Naive thymus-derived CD4-positive, alpha-beta T cell (primary cell): ENCODE measurements at regions of chr1 and their contacts with region 1.

Region 1: DNA sequence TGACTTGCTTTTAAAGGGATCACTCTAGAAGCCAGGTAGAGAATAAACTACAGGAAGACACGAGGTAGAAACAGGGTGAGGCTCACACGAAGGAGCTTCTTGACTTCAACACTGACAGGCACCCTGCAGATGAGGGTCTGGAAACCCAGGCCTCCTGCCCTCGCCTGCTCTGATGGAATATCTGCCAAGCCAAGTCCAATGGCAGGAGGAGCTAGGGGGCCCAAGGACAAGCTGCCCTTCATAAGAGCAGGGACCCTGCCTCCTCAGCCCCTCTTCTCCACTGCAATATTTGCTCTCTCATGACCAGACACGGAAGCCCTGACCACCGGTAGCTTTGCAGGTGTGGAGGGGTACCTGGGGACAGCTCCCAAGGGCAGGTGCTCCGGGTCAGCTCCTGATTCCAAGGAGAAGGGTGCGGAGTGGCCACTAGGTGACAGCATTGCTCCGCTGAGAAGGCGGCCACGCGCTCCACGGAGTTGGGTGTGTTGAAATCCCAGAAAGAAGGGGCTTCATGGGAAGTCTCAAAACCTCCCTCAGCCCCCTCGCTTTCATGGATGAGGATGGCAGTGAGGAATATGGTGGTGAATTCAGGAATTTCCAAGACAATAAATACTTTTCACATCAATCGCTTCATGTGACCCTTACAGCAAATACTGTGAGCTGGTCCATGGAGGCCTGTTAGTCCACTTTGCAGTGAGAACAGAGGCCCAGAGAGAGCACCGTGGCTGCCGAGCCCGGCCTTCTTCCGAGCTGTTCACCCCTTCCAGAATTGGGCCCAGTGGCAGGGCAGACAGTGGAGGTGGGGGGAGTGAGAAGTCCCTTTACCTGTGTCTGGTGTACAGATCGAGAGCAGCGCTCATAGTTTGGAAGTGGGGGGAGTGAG is 33.2 kb upstream of the PAX7 start:
- DNase-seq: peak; percentile 16 to 67 (median 52)
- ATAC-seq: peak; percentile 49
- H3K4me3 ChIP-seq: no peak overlapping the region
- H3K4me3 Mint-ChIP-seq: no peak overlapping the region
- H3K27ac ChIP-seq: no peak overlapping the region
- H3K27ac Mint-ChIP-seq: no peak overlapping the region
- H3K4me1 ChIP-seq: no peaks in the 10 kb centered on the region
- H3K4me1 Mint-ChIP-seq: peaks cover 0 to 4% (median 0%) of the 10 kb centered on the region in 7 donors
- H3K27me3 ChIP-seq: no peaks in the 10 kb centered on the region
- H3K27me3 Mint-ChIP-seq: peaks cover 12 to 48% (median 23%) of the 10 kb centered on the region in 5 donors

Region 2: GRCh38 chr1:18470671-18471355 is 126.6 kb before region 1 on chr1:
- CTCF ChIA-PET with region 1: no interaction called
- POLR2A ChIA-PET with region 1: no interaction called
- intact Hi-C with region 1: no loop called
- DNase-seq: no peak
- ATAC-seq: no peak
- H3K4me3 ChIP-seq: no peak overlapping the region
- H3K4me3 Mint-ChIP-seq: no peak overlapping the region
- H3K27ac ChIP-seq: no peak overlapping the region
- H3K27ac Mint-ChIP-seq: no peak overlapping the region
- H3K4me1 ChIP-seq: no peaks in the 10 kb centered on the region
- H3K4me1 Mint-ChIP-seq: no peaks in the 10 kb centered on the region
- H3K27me3 ChIP-seq: no peaks in the 10 kb centered on the region
- H3K27me3 Mint-ChIP-seq: peaks cover 0 to 49% (median 5%) of the 10 kb centered on the region in 5 donors

Region 3: GRCh38 chr1:18681423-18681835 is 84.0 kb after region 1 on chr1:
- CTCF ChIA-PET with region 1: interaction called, 58 read pairs
- POLR2A ChIA-PET with region 1: interaction called, 4 read pairs
- intact Hi-C with region 1: loop called (anchors 1 kb)
- DNase-seq: peak in 6 of 9 donors; percentile 10 to 55 (median 38)
- ATAC-seq: no peak
- H3K4me3 ChIP-seq: no peak overlapping the region
- H3K4me3 Mint-ChIP-seq: no peak overlapping the region
- H3K27ac ChIP-seq: no peak overlapping the region
- H3K27ac Mint-ChIP-seq: no peak overlapping the region
- H3K4me1 ChIP-seq: peaks cover 0 to 3% of the 10 kb centered on the region in 2 donors
- H3K4me1 Mint-ChIP-seq: peaks cover 0 to 10% (median 2%) of the 10 kb centered on the region in 7 donors
- H3K27me3 ChIP-seq: no peaks in the 10 kb centered on the region
- H3K27me3 Mint-ChIP-seq: peaks cover 2 to 27% (median 14%) of the 10 kb centered on the region in 5 donors

Region 4: DNA sequence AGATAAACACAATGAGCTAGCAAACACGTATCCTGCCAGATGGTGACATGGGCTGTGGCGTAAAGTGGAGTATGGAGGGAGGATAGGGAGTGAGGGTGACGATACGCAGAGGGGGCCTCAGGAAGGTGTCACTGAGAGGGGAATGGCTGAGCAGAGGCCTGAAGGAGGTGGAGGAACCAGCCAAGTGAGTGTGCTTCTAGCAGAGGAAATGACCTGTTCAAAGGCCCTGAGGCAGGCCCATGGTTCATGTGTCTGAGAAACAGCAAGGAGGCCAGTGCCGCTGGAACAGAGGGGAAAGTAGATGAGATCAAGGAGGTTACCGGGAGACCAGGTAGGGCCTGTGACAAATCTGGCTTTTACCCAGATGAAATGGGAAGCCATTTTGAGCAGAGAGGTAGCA is 226.0 kb after region 1 on chr1:
- CTCF ChIA-PET with region 1: interaction called, 14 read pairs
- POLR2A ChIA-PET with region 1: no interaction called
- intact Hi-C with region 1: no loop called
- DNase-seq: no peak
- ATAC-seq: no peak
- H3K4me3 ChIP-seq: no peak overlapping the region
- H3K4me3 Mint-ChIP-seq: no peak overlapping the region
- H3K27ac ChIP-seq: no peak overlapping the region
- H3K27ac Mint-ChIP-seq: no peak overlapping the region
- H3K4me1 ChIP-seq: peaks cover 0 to 4% of the 10 kb centered on the region in 2 donors
- H3K4me1 Mint-ChIP-seq: peaks cover 0 to 7% (median 3%) of the 10 kb centered on the region in 7 donors
- H3K27me3 ChIP-seq: no peaks in the 10 kb centered on the region
- H3K27me3 Mint-ChIP-seq: peaks cover 22 to 45% (median 32%) of the 10 kb centered on the region in 5 donors

Region 5: GRCh38 chr1:18875107-18875795 is 277.9 kb after region 1 on chr1:
- CTCF ChIA-PET with region 1: interaction called, 17 read pairs
- POLR2A ChIA-PET with region 1: no interaction called
- intact Hi-C with region 1: no loop called
- DNase-seq: peak; percentile 34 to 70 (median 54)
- ATAC-seq: peak; percentile 76
- H3K4me3 ChIP-seq: no peak overlapping the region
- H3K4me3 Mint-ChIP-seq: no peak overlapping the region
- H3K27ac ChIP-seq: no peak overlapping the region
- H3K27ac Mint-ChIP-seq: no peak overlapping the region
- H3K4me1 ChIP-seq: no peaks in the 10 kb centered on the region
- H3K4me1 Mint-ChIP-seq: no peaks in the 10 kb centered on the region
- H3K27me3 ChIP-seq: no peaks in the 10 kb centered on the region
- H3K27me3 Mint-ChIP-seq: no peaks in the 10 kb centered on the region